PC-3 (cell line): ENCODE measurements at regions of chr17 and their contacts with region 1.

Region 1: DNA sequence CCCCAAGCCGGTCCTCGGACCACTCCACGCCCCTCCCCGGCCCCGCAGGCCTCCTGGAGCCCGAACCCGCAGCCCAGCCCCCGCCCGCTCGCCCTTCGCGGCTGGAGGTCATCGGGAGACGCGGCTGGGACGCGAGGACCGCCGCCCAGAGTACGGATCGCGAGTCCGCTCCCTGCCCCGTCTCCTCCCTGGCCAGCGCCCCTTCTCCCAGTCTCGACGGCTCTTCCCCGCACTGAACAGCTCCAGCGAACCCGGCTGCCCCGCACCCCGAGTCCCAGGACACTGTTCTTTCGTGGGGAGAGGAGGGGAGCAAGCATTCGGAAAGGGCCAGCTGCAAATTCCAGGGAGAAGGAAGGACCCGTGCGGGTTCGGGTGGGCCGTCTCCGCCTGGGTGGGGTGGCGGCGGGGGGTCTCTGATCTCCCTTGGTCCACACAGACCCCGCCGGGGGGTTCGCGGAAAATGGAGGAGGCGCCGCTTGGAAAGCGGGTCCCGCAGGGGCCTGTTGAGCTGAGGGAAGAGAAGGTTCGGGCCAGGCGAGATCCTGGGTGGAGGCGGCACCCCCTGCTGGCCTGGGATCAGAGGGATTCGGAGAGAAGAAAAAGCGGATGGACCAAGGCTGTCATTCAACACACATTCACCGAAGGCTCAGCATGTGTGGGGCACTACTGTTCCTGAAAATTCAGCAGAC is 632 bp upstream of the RTN4RL1 start:
- DNase-seq: peak; percentile 76
- ATAC-seq: peak; percentile 62
- H3K4me3 ChIP-seq: peak overlapping the region; percentile 76
- H3K27ac ChIP-seq: no peak overlapping the region
- H3K4me1 ChIP-seq: peaks cover 1% of the 10 kb centered on the region; the same call in 1 of the 2 replicates
- H3K27me3 ChIP-seq: no peaks in the 10 kb centered on the region
- CTCF ChIP-seq: peak; percentile 70

Region 2: DNA sequence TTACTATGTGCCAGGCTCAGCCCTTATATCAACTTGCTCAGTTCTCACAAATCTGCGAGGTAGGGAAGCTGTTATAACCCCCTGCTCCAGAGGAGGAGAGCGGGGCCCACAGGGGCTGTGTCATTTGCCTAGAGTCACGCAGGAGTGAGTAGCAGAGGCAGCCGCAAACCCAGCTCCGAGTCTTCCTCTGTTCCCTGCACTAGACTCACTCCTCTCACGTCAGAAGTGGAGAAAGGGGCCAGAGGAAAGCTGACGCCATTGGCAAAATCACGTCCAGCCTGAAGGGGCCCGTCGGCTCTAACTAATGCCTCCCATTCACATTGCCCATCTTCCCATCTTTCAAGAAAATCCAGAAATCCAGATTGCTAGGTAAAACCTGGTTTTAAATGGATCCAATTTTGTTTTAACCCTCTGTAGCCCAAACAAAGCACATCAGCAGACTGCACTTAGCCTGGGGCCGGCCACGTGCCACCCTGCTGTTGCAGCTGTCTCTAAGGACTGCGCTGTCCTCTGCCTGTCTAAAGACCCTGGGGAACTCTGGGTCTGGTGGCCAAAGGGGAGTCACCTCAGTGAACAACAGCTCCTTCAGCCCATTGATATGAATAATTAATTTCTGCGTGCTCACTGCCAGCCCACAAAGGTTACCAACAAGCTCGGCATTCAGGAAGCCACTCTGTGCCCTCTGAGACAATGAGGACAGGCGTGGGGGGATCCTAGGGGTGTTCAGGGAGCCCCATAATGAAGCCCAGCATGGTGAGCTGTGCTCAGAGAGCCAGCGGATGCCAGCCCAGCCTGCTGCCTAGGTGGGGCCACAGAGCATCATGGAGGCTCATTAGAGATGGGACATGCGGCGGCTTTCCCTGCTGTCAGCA is 809.3 kb before region 1 on chr17:
- CTCF ChIA-PET with region 1: no interaction called
- POLR2A ChIA-PET with region 1: no interaction called
- intact Hi-C with region 1: no loop called
- DNase-seq: no peak
- ATAC-seq: no peak
- H3K4me3 ChIP-seq: no peak overlapping the region
- H3K27ac ChIP-seq: no peak overlapping the region
- H3K4me1 ChIP-seq: no peaks in the 10 kb centered on the region
- H3K27me3 ChIP-seq: no peaks in the 10 kb centered on the region
- CTCF ChIP-seq: no peak

Region 3: GRCh38 chr17:1839516-1839915 is 186.2 kb before region 1 on chr17:
- CTCF ChIA-PET with region 1: no interaction called
- POLR2A ChIA-PET with region 1: interaction called, 18 read pairs
- intact Hi-C with region 1: no loop called
- DNase-seq: no peak
- ATAC-seq: no peak
- H3K4me3 ChIP-seq: no peak overlapping the region
- H3K27ac ChIP-seq: no peak overlapping the region
- H3K4me1 ChIP-seq: no peaks in the 10 kb centered on the region
- H3K27me3 ChIP-seq: no peaks in the 10 kb centered on the region
- CTCF ChIP-seq: no peak

Region 4: DNA sequence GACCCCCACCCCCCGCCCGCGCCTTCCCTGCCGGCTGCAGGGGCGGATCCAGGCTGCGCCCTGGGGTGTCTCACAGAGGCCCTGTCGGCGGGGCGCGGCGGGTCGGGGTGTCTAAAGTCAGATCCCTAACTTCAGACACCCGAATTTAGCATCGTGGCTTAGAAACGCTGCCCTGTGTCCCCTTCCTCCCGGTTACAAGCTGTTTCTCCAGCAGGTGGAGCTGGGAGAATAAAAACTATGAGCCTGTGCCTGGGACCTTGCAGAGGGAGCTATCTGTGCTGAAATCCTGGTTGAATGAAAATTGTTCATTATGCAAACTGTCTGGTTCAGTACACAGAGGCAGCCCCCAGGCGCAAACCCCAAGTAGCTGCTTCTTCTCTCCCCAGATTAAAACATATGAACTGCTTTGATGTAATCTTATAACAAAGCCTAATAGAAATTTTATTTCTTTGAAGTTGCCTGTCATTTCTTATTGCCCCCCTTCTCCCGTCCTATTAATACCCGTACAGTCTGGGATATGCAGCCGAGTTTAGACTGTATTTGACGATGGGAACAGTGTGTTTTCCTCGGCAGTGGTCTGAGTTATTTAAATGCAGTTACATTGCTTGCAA is 117.0 kb before region 1 on chr17:
- CTCF ChIA-PET with region 1: interaction called, 52 read pairs
- POLR2A ChIA-PET with region 1: no interaction called
- intact Hi-C with region 1: no loop called
- DNase-seq: peak; percentile 78
- ATAC-seq: peak; percentile 96
- H3K4me3 ChIP-seq: peak overlapping the region; percentile 64
- H3K27ac ChIP-seq: no peak overlapping the region
- H3K4me1 ChIP-seq: peaks cover 8% of the 10 kb centered on the region; the same call in 1 of the 2 replicates
- H3K27me3 ChIP-seq: no peaks in the 10 kb centered on the region
- CTCF ChIP-seq: peak; percentile 85

Region 5: DNA sequence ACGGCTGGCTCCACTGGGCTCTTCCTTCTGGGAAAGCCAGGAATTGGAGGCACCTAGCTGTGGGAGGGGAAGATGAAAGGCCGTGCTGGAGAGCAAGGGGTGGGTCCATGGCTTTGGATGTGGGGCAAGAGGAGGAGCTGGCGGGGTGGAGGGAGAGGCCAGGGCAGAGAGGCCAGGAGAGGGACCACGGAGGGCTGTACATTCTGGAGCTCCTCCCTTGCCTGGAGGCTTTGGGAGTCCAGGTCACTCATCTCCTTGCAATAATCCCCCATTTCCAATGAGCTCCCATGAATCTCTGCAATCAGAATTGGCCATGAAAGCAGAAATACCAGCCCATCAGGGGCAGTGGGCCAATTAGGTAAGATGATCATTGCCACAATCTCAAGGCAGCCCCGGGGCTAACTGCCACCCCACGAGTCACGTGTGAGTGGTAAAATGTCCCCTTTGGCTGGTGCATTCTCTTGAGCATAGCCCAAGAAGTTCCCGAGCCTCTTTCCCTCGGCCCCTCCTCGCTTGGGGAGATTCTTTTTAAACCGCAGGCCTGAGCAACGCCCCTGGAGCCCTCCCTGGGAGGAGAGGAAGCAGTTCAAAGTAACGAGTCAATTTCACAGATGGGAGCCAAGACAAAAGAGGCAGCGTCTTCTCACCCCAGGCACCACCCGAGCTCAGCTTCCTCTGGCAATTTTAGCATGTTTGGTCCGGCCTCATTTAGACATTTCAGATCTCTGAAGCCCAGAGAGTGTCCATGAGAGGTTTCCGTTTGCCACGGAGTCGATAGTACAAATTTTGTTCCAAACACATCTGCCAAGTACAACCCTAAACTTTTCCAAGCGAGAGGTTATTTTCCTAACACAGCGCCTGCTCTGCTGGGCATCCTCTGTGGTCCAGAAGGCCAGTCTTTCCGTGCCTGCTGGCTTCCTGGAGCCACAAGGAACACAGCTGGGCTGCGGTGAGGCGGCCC is 14.1 kb before region 1 on chr17:
- CTCF ChIA-PET with region 1: no interaction called
- POLR2A ChIA-PET with region 1: interaction called, 18 read pairs
- intact Hi-C with region 1: no loop called
- DNase-seq: peak; percentile 95
- ATAC-seq: peak; percentile 79
- H3K4me3 ChIP-seq: peak overlapping the region; percentile 50
- H3K27ac ChIP-seq: peak overlapping the region; percentile 89
- H3K4me1 ChIP-seq: peaks cover 26% of the 10 kb centered on the region
- H3K27me3 ChIP-seq: no peaks in the 10 kb centered on the region
- CTCF ChIP-seq: no peak

Region 6: DNA sequence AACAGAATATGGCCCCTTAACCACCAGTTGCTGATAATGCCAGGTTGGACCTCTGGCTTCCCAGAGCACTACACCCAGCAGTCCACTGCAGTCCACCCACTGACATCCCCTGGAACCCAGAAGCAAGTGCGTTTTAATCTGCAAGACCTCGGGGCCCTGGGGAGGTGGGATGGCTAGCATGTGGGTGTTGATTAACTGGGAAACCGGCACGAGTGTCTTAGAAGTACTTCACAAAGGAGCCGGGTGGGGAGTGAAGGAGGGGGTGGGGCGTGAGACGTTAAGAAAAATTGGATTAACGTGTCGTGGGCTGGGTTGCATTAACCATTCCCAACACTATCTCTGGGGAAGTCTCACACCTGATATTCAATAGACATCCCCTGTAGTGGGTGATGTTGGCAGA is 23.0 kb after region 1 on chr17:
- CTCF ChIA-PET with region 1: no interaction called
- POLR2A ChIA-PET with region 1: no interaction called
- intact Hi-C with region 1: no loop called
- DNase-seq: no peak
- ATAC-seq: no peak
- H3K4me3 ChIP-seq: peak overlapping the region; percentile 67
- H3K27ac ChIP-seq: no peak overlapping the region
- H3K4me1 ChIP-seq: peaks cover 9% of the 10 kb centered on the region
- H3K27me3 ChIP-seq: no peaks in the 10 kb centered on the region
- CTCF ChIP-seq: no peak